CD4-positive, alpha-beta memory T cell (primary cell): ENCODE measurements at regions of chr4 and their contacts with region 1.

Region 1: GRCh38 chr4:122602277-122603142 is 18.4 kb downstream of the IL21 start:
- DNase-seq: peak in 3 of 5 donors; percentile 24 to 30 (median 28)
- H3K4me3 ChIP-seq: no peak overlapping the region
- H3K4me3 Mint-ChIP-seq: peak overlapping the region in 1 of 8 donors; percentile 0
- H3K27ac ChIP-seq: no peak overlapping the region
- H3K27ac Mint-ChIP-seq: no peak overlapping the region
- H3K4me1 ChIP-seq: no peaks in the 10 kb centered on the region
- H3K4me1 Mint-ChIP-seq: peaks cover 0 to 5% (median 2%) of the 10 kb centered on the region in 4 donors
- H3K27me3 ChIP-seq: no peaks in the 10 kb centered on the region
- H3K27me3 Mint-ChIP-seq: peaks cover 0 to 9% of the 10 kb centered on the region in 2 donors

Region 2: GRCh38 chr4:122548452-122548851 is 54.1 kb before region 1 on chr4:
- CTCF ChIA-PET with region 1: no interaction called
- POLR2A ChIA-PET with region 1: no interaction called
- intact Hi-C with region 1: no loop called
- DNase-seq: no peak
- H3K4me3 ChIP-seq: no peak overlapping the region
- H3K4me3 Mint-ChIP-seq: no peak overlapping the region
- H3K27ac ChIP-seq: no peak overlapping the region
- H3K27ac Mint-ChIP-seq: no peak overlapping the region
- H3K4me1 ChIP-seq: peaks cover 2% of the 10 kb centered on the region
- H3K4me1 Mint-ChIP-seq: peaks cover 0 to 10% (median 4%) of the 10 kb centered on the region in 4 donors
- H3K27me3 ChIP-seq: no peaks in the 10 kb centered on the region
- H3K27me3 Mint-ChIP-seq: no peaks in the 10 kb centered on the region

Region 3: GRCh38 chr4:122612540-122612939 is 10.0 kb after region 1 on chr4:
- CTCF ChIA-PET with region 1: interaction called, 11 read pairs
- POLR2A ChIA-PET with region 1: no interaction called
- intact Hi-C with region 1: no loop called
- DNase-seq: no peak
- H3K4me3 ChIP-seq: no peak overlapping the region
- H3K4me3 Mint-ChIP-seq: no peak overlapping the region
- H3K27ac ChIP-seq: no peak overlapping the region
- H3K27ac Mint-ChIP-seq: no peak overlapping the region
- H3K4me1 ChIP-seq: peaks cover 13% of the 10 kb centered on the region
- H3K4me1 Mint-ChIP-seq: peaks cover 8 to 13% (median 12%) of the 10 kb centered on the region in 4 donors
- H3K27me3 ChIP-seq: no peaks in the 10 kb centered on the region
- H3K27me3 Mint-ChIP-seq: peaks cover 0 to 5% of the 10 kb centered on the region in 2 donors

Region 4: DNA sequence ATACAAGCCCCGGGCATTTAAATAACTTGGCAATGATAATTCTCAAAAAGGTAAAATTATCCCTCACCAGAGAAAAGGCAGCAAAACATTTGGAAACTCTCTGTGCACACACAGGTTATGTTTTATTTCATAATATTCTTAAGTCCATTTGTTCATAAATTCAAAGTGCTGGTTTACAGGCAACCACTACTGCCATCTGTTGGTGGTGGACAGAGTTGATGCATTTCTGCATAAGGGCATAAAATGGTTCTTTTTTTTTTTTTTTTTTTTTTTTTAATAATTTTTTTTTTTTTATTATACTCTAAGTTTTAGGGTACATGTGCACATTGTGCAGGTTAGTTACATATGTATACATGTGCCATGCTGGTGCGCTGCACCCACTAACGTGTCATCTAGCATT is 49.9 kb after region 1 on chr4:
- CTCF ChIA-PET with region 1: interaction called, 39 read pairs
- POLR2A ChIA-PET with region 1: interaction called, 3 read pairs
- intact Hi-C with region 1: loop called (anchors 5 kb)
- DNase-seq: peak; percentile 40 to 52 (median 47)
- H3K4me3 ChIP-seq: no peak overlapping the region
- H3K4me3 Mint-ChIP-seq: no peak overlapping the region
- H3K27ac ChIP-seq: no peak overlapping the region
- H3K27ac Mint-ChIP-seq: no peak overlapping the region
- H3K4me1 ChIP-seq: no peaks in the 10 kb centered on the region
- H3K4me1 Mint-ChIP-seq: no peaks in the 10 kb centered on the region
- H3K27me3 ChIP-seq: no peaks in the 10 kb centered on the region
- H3K27me3 Mint-ChIP-seq: no peaks in the 10 kb centered on the region